ENCODE measurements at regions of chr18 and their contacts with region 1.

Region 1: DNA sequence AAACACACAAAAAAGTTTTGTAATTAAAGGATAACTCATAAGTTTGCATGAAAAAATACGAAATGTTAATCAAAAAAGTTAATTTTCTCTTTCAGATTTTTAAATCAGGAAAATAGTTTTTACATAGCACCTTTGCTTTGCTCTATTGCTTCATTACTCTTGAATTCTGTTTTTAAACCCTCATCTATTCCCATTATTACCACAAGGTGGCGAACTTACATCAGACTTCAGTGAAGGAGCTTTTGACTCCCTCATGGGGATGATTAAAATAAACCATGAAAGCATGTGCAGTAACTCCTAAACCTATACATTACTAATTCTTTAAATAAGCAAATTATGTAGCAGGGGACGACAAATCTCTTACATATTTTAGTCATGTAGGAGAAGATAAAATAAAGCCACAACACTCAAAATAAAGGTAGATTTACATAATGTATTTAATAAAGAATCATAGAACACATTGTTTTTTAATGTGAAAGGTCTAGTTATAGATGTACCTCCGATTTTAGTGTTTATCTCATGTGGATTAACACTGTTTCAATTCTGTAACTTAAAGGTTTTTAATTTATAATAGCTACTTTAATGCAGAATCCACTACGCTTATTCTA is 105.2 kb downstream of the NETO1 start:
- DNase-seq: no peak
- ATAC-seq: peak; percentile 25 to 30

Region 2: DNA sequence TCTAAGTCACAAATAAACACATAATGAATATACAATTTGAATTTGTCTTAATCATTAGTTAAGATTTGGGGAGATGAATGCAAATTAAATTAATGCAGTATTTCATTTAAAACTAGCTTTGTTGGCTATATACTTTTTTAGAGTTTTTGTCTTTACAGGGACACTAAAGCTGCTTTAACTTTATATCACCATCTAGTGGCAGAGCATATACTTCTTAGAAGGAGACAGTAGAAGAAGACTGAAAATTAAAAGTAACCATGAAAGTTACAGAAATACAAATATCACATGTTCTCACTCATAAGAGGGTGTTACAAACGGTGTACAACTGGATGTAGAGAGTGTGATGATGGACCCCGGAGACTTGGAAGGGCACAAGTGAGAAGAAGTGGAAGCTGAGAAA is 373.5 kb after region 1 on chr18:
- intact Hi-C with region 1: loop called (anchors 5 to 10 kb)
- DNase-seq: no peak
- ATAC-seq: no peak

Region 3: GRCh38 chr18:73842795-73843394 is 1080.3 kb after region 1 on chr18:
- intact Hi-C with region 1: loop called (anchors 2 to 5 kb)
- DNase-seq: peak; percentile 29
- ATAC-seq: peak in 1 of 2 donors; percentile 44

Region 4: GRCh38 chr18:74116633-74117554 is 1354.3 kb after region 1 on chr18:
- intact Hi-C with region 1: loop called in 1 of 2 experiments (anchors 5 kb)
- DNase-seq: no peak
- ATAC-seq: peak in 1 of 2 donors; percentile 23

Region 5: DNA sequence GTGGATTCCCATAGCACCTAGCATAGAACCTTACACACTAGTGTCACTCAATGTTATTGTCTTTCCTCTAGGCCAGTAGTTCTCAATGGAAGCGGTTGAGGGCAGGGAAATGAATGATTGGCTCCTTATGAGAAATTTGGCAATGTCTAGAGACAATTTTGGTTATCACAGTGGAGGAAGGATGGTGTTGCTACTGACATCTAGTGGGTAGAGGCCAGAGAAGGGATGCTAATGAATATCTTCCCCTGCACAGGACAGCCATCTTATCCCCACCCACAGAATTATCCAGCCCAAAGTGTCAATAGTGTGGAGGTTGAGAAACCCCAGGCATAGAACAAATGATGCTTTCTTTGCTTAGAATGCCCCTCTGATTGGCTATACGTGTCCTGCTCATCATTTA is 1568.8 kb after region 1 on chr18:
- intact Hi-C with region 1: loop called in 1 of 2 experiments (anchors 10 kb)
- DNase-seq: no peak
- ATAC-seq: peak; percentile 72 to 77